ENCODE measurements at regions of chrX and their contacts with region 1.

Region 1: DNA sequence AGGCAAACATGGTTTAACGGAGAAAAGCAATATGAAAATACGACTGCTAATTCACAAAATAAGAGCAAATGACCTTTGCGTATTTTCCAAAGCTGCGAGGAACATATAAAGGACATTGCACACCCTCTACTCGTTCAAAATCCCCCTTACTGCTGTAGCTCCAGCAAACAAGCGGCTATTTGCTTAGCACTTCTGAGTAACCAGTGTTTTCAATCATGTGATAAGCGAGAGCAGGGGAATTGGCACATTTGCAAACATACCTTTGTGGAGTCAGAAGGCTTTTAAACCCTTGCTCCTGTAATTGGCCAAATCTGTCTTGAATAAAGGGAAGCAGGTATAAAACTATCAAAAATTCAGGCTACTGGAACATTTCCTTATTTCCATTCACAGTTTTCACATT is 610.2 kb downstream of the UBE2NL start:
- DNase-seq: no peak
- H3K4me3 ChIP-seq: no peak overlapping the region
- H3K27ac ChIP-seq: no peak overlapping the region
- H3K4me1 ChIP-seq: no peaks in the 10 kb centered on the region
- H3K27me3 ChIP-seq: no peaks in the 10 kb centered on the region
- CTCF ChIP-seq: no peak

Region 2: DNA sequence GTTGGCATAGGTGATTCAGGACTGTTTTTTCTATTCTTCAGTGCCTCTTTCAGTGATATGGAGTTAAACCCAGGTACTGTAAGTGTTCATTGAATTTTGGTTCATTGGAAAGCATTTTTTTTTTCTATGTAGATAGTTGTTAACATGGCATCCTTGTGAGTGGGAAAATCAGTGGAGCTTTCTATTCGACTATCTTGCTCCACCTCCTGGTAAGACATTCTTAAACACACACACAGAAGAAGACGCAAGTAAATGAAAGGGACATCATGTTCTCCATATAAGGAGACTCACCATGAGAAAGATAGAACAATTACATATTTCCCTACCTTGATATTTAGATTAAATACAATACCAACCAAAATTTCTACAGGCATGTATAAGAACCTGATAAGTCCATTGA is 154.7 kb after region 1 on chrX:
- CTCF ChIA-PET with region 1: no interaction called
- POLR2A ChIA-PET with region 1: interaction called, 13 read pairs
- intact Hi-C with region 1: no loop called
- DNase-seq: no peak
- H3K4me3 ChIP-seq: no peak overlapping the region
- H3K27ac ChIP-seq: no peak overlapping the region
- H3K4me1 ChIP-seq: no peaks in the 10 kb centered on the region
- H3K27me3 ChIP-seq: no peaks in the 10 kb centered on the region
- CTCF ChIP-seq: no peak

Region 3: DNA sequence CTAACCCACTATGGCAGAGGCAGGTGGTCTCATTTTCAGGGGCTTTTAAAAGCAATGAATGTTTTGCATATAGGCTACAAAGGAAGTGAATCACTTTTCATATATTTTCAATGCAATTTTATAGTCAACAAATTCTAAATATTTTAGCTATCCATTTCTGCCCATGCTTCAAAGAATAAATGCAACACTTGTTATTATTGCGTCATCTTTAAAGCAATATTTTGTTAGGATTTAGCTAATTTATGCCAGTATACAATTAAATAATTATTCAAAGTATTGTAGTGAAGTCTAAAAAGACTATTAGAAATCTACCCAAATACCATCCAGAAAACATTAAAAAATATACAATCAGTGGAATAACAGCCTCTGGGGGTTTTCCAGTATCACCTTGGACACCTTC is 244.2 kb after region 1 on chrX:
- CTCF ChIA-PET with region 1: no interaction called
- POLR2A ChIA-PET with region 1: no interaction called
- intact Hi-C with region 1: no loop called
- DNase-seq: no peak
- H3K4me3 ChIP-seq: no peak overlapping the region
- H3K27ac ChIP-seq: no peak overlapping the region
- H3K4me1 ChIP-seq: no peaks in the 10 kb centered on the region
- H3K27me3 ChIP-seq: no peaks in the 10 kb centered on the region
- CTCF ChIP-seq: no peak

Region 4: DNA sequence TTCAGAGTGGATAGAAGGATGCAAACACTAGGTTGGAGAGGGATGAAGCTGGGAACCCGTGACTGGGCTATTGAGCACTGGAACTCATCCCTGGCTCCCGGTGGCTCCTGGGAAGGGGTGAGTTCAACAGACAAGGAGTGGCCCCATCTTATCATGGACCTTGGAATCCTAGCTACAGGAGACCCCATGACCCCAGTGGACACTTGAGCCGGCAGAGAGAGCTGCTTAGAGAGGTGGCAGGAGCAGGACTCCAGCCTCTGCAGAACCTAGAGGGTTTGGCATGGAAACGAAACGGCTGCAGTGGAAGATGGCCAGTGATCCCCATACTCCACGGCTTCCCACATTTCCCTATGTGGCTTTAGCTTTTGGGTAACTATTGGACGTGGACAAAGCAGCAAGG is 547.4 kb after region 1 on chrX:
- CTCF ChIA-PET with region 1: no interaction called
- POLR2A ChIA-PET with region 1: no interaction called
- intact Hi-C with region 1: no loop called
- DNase-seq: no peak
- H3K4me3 ChIP-seq: no peak overlapping the region
- H3K27ac ChIP-seq: no peak overlapping the region
- H3K4me1 ChIP-seq: no peaks in the 10 kb centered on the region
- H3K27me3 ChIP-seq: no peaks in the 10 kb centered on the region
- CTCF ChIP-seq: no peak

Region 5: DNA sequence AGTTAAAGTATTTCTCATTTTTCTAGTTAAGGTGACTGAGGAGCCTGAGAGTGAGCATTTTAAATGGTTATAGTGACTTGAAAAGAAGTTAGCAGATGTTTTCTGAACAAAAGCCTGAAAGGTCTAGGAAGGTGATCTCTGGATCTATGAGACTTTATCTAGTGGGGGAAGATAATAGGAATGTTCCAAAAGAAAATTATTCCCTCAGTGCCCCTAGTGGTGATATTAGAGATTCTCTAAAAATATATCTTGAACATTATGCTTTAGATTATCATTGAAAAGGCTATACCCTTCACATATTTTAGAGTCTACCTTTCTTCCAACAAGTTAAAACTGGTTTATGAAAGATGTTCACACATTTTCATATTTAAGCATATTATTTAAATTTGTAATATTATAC is 684.2 kb after region 1 on chrX:
- CTCF ChIA-PET with region 1: no interaction called
- POLR2A ChIA-PET with region 1: no interaction called
- intact Hi-C with region 1: no loop called
- DNase-seq: no peak
- H3K4me3 ChIP-seq: no peak overlapping the region
- H3K27ac ChIP-seq: no peak overlapping the region
- H3K4me1 ChIP-seq: no peaks in the 10 kb centered on the region
- H3K27me3 ChIP-seq: no peaks in the 10 kb centered on the region
- CTCF ChIP-seq: peak; percentile 64

Measured in PC-9 (cell line).